Aorta (tissue), 5 donors: ENCODE measurements at regions of chr2 and their contacts with region 1.

Region 1: DNA sequence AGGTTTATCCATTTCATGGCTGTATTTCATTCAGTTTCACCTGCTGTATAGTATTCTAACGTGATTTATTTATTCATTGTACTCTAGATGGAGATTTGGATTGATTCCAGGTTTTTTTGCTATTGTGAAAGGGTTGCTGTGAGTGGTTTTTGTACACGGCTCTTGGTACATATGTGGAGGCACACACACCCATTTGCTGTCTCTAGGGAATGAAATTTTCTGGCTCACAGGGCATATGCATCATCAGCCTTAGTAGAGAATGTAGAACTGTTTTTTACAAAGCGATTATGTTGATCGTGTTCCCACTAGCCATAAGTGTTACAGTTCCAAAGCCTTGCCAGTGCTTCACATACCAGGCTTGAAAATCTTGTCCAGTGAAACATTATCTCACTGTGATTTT is 5.1 kb downstream of the SPTBN1 start:
- DNase-seq: no peak
- ATAC-seq: no peak
- H3K4me3 ChIP-seq: no peak overlapping the region
- H3K27ac ChIP-seq: no peak overlapping the region
- H3K4me1 ChIP-seq: peaks cover 0 to 3% of the 10 kb centered on the region in 2 donors
- H3K27me3 ChIP-seq: no peaks in the 10 kb centered on the region

Region 2: DNA sequence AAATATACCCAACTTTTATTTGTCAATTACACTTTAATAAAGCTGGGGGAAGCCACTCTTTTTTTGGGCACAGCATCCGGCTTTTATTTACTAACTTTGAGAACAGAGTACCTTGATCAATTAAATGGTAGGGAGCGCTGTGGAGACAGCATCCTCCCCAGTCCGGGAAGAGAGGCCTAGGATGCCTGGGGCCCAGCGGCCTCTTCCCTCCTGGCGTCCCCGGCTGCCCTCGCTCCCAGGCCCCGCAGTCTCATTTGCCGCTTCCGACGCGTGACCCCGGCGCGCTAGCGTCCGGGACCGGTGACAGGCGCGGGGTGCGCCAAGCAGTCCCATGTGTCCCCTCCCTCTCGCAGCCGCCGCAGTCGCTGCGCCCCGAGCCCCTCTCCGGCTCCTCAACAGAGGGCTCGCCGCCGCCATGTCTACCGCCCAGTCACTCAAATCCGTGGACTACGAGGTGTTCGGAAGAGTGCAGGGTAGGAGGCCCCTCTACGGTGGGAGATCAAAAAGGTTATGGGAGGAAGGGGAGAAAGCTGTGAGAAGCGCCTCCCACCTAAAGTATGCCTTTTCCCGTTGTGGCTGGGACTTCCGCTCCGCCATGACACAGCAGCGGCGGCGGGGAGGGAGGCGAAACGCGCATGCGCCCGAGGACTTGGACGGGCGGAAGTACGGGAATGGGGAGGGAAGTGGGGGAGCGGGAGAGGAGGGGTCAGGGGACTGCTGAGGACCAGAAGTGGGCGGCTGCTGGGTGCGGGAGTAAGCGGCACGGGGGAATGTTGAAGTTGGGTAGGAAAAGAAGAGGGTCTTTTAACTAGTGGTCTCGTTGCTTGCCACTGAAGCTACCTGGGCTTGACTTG is 345.8 kb before region 1 on chr2 and contains the start of gene ACYP2:
- intact Hi-C with region 1: loop called (anchors 5 to 10 kb)
- DNase-seq: peak; percentile 98 to 99
- ATAC-seq: peak; percentile 98
- H3K4me3 ChIP-seq: peak within 1 kb of the TSS; percentile 23 to 48
- H3K27ac ChIP-seq: peak within 1 kb of the TSS; percentile 78 to 88
- H3K4me1 ChIP-seq: no peaks in the 10 kb centered on the region
- H3K27me3 ChIP-seq: no peaks in the 10 kb centered on the region
- total RNA-seq, gene ACYP2: 16.3 to 21.2 TPM

Region 3: DNA sequence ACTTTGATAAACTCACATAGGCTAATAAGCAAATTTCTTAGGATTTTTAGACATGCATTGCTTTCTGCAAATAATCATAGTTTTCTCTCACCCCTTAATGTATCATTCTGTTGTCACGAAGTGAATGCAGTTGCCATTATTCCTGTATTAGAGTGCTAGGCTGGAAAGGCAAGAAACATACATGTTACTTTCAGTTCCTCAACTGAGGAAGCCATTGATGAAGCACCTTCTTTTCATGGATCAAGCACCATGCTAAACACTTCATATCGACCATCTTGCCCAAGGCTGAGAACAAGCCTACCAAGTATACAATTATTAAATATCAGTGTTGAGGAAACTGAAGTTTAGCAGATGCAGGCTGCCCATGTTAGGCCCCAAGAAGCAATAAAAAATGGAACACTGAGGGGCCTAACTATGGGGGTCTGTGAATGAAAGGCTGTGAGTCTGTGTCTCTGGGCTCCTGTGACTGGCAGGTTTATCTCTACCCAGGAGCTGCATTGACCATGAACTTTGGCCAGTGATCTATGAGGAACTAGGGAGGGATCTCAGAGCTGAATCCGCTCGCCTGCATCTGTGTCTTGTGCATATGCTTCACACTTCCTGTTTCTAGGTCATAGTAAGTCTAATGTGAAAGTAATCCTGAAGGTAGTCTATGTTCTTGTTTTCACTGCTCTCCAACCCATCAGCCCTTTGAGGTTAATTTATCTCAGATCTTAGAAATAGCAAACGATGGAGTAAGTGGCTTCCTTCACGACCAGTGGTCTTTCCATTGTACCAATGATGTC is 189.2 kb before region 1 on chr2:
- intact Hi-C with region 1: no loop called
- DNase-seq: no peak
- ATAC-seq: no peak
- H3K4me3 ChIP-seq: no peak overlapping the region
- H3K27ac ChIP-seq: no peak overlapping the region
- H3K4me1 ChIP-seq: peaks cover 0 to 2% of the 10 kb centered on the region in 2 donors
- H3K27me3 ChIP-seq: no peaks in the 10 kb centered on the region

Region 4: DNA sequence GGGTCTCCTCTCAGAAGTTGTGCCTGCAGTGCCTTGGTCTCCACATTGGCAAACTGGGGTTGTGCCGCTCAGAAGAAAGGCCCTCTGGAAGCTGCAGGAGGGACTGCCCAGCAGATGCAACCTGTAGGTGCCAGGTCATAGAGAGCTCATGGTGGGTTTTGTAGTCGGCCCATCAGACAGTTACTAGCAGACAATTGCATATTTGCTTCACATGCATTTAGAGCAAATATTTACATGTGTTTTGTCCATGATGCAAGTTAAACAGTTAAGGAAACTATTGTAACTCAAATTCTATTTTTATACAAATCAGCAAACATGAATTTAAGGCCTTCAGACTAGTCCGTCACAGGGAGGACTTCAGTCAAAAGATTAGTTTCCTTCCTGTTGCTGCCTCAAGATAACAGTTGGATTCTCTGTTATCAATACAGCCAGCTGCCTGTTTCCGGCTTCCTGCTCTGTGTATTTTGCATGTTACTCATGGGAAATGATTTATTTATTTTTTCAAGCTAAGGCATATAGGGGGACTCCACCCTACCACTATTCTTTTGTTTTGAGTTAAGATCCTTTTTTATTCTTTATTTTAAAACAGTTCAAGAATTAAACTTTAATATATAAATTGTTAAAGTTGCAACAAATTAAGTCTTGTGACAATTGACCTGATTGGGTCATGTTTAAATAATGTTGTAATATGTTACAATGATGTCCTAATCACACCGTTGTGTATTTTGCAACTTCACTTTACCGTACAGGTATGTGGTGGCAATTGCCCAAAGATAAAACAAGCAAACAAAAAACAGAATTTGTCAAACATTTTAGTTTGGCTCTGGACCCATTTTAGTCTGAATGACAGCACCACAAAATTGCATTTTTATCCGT is 128.3 kb after region 1 on chr2:
- intact Hi-C with region 1: loop called in 1 of 2 experiments (anchors 10 kb)
- DNase-seq: no peak
- ATAC-seq: peak; percentile 37
- H3K4me3 ChIP-seq: no peak overlapping the region
- H3K27ac ChIP-seq: no peak overlapping the region
- H3K4me1 ChIP-seq: peaks cover 0 to 2% of the 10 kb centered on the region in 2 donors
- H3K27me3 ChIP-seq: no peaks in the 10 kb centered on the region